A673 (cell line): ENCODE measurements at regions of chr1 and their contacts with region 1.

Region 1: DNA sequence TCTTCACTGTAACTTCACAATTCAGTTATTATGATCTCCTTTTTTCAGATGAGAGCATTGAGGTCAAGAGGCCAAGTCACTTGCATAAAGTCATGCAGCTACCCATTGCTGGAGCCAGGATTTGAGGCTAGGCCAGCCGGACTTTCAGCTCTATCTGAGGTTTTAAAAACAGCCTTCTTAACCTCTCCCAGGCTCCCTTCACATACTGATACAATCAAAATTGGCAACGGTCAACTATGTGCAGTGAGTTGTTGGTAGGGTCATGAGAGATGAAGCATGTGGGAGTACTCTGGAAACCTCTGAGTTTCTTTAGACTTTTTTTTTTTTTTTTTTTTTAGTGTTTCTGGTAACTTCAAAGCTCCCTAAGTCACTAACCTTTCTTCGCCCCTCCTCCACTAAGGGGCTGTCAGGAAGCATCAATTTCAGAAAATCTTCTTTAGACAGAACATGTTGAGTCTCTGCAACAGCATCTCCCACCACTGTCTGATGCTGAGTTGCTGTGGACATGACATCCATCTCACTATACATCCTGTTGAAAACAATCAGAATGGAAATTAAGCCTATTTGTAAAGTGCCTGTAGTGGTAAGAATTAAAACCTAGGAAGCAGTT is 201.8 kb downstream of the SIPA1L2 start:
- DNase-seq: no peak
- H3K4me3 ChIP-seq: no peak overlapping the region
- H3K27ac ChIP-seq: no peak overlapping the region
- H3K4me1 ChIP-seq: peaks cover 4% of the 10 kb centered on the region
- H3K27me3 ChIP-seq: no peaks in the 10 kb centered on the region
- CTCF ChIP-seq: no peak

Region 2: DNA sequence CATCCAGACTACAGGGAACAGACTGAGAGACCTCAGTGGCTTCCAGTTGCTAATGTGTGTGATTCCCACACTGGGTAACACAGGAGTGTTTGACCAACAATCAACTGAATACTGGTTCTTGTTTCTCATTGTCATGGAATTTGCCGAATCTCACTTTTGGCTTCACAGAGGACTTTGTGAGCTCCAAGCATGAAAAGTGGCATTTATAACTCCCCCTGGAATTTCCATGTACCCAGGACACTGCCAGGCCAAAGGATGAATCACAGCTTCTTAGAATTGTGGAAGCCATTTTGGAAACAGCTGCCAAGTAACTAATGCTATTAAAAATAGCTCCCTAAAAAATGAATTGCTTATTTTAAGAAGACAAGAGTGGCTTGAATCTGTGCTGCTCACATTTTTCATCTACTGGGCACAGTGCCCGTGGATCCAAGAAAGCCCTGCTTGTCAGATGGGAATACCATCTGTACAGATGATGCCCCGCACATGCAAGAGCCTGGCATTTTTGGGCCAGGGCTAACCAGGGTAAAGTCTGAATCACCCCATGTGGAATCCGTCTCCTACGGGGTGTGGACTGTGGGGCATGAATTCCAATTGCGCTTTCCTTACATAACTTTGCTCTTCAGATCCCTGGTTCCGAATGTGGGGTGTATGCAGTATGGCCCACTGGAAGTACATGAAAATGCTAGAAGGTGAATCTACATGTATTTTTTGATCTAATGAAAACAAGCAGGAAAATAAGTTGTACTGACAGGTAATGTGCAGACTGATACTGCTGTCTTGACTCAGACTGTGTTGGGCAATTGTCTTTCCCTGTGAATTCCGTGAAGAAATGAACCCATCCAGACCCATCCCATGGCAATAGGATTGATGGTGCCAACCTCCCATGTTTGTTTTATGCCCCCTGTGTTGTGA is 285.5 kb before region 1 on chr1:
- CTCF ChIA-PET with region 1: no interaction called
- POLR2A ChIA-PET with region 1: no interaction called
- intact Hi-C with region 1: no loop called
- DNase-seq: peak; percentile 58
- H3K4me3 ChIP-seq: no peak overlapping the region
- H3K27ac ChIP-seq: no peak overlapping the region
- H3K4me1 ChIP-seq: no peaks in the 10 kb centered on the region
- H3K27me3 ChIP-seq: peaks cover 3% of the 10 kb centered on the region
- CTCF ChIP-seq: no peak

Region 3: DNA sequence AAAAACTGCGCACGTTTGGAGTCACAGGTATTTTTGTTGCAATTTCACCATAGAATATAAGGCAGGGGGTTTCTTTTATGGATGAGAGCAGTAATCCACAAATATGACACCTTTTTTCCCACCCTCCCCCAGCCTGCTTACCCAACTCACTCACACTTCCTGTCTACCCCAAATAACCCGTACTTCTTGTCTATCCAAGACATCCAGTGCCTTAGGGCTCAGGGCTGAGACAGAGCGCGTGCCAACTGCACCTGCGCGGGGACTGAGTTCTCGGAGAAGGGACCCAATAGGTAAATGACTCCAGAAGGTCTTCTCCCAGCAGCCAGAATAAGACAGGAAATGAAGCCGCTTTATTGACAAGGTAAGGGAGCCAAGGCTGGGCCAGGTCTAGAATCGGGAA is 167.3 kb before region 1 on chr1:
- CTCF ChIA-PET with region 1: no interaction called
- POLR2A ChIA-PET with region 1: no interaction called
- intact Hi-C with region 1: no loop called
- DNase-seq: no peak
- H3K4me3 ChIP-seq: no peak overlapping the region
- H3K27ac ChIP-seq: no peak overlapping the region
- H3K4me1 ChIP-seq: no peaks in the 10 kb centered on the region
- H3K27me3 ChIP-seq: no peaks in the 10 kb centered on the region
- CTCF ChIP-seq: no peak

Region 4: GRCh38 chr1:232457595-232457994 is 29.5 kb after region 1 on chr1:
- CTCF ChIA-PET with region 1: no interaction called
- POLR2A ChIA-PET with region 1: interaction called, 27 read pairs
- intact Hi-C with region 1: no loop called
- DNase-seq: no peak
- H3K4me3 ChIP-seq: no peak overlapping the region
- H3K27ac ChIP-seq: no peak overlapping the region
- H3K4me1 ChIP-seq: no peaks in the 10 kb centered on the region
- H3K27me3 ChIP-seq: no peaks in the 10 kb centered on the region
- CTCF ChIP-seq: no peak

Region 5: GRCh38 chr1:232853994-232854797 is 426.1 kb after region 1 on chr1:
- CTCF ChIA-PET with region 1: no interaction called
- POLR2A ChIA-PET with region 1: no interaction called
- intact Hi-C with region 1: no loop called
- DNase-seq: peak; percentile 53
- H3K4me3 ChIP-seq: no peak overlapping the region
- H3K27ac ChIP-seq: no peak overlapping the region
- H3K4me1 ChIP-seq: peaks cover 17% of the 10 kb centered on the region
- H3K27me3 ChIP-seq: no peaks in the 10 kb centered on the region
- CTCF ChIP-seq: no peak